Activated CD8-positive, alpha-beta T cell treated with anti-CD3 and anti-CD28 coated beads, Interleukin-2, amount 10 ng/mL, durations not matched to agents 7 days and 5 days (primary cell): ENCODE measurements at regions of chr18 and their contacts with region 1.

Region 1: DNA sequence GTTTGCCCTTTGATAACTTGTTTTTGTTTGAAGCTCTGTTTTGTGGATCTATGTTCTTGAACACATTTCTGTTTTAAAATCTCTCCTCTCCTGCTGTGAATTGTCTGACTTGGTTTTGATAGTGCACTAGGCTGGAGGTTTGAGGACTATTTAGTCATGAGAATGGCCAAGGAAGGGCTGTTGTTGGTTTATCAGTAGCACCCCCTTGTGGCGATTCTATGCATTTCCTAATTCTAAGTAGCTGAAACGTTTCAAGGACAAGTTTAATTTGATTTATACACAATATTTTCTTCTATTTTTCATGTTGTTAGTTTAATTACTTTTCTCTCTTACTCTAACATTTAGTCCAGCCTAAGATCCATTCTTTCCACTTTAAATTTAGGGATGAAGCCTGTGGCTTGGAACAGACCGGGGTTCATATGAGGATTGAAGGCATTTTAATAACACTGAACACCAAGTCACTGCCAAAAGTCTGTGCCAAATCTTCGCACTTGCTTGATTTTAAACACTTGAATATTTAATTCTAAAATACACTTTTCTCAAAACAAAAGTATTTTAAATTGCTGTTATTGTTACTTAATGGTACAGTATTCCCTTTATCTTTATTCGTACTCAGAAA is 166.0 kb downstream of the SOCS6 start:
- DNase-seq: peak; percentile 52
- ATAC-seq: peak; percentile 44
- H3K4me3 Mint-ChIP-seq: no peak overlapping the region
- H3K27ac Mint-ChIP-seq: no peak overlapping the region
- H3K4me1 Mint-ChIP-seq: no peaks in the 10 kb centered on the region
- H3K27me3 Mint-ChIP-seq: no peaks in the 10 kb centered on the region

Region 2: GRCh38 chr18:70195852-70196434 is 258.9 kb before region 1 on chr18:
- CTCF ChIA-PET with region 1: interaction called, 29 read pairs
- POLR2A ChIA-PET with region 1: no interaction called
- DNase-seq: peak; percentile 29
- ATAC-seq: no peak
- H3K4me3 Mint-ChIP-seq: no peak overlapping the region
- H3K27ac Mint-ChIP-seq: no peak overlapping the region
- H3K4me1 Mint-ChIP-seq: peaks cover 8% of the 10 kb centered on the region
- H3K27me3 Mint-ChIP-seq: no peaks in the 10 kb centered on the region

Region 3: DNA sequence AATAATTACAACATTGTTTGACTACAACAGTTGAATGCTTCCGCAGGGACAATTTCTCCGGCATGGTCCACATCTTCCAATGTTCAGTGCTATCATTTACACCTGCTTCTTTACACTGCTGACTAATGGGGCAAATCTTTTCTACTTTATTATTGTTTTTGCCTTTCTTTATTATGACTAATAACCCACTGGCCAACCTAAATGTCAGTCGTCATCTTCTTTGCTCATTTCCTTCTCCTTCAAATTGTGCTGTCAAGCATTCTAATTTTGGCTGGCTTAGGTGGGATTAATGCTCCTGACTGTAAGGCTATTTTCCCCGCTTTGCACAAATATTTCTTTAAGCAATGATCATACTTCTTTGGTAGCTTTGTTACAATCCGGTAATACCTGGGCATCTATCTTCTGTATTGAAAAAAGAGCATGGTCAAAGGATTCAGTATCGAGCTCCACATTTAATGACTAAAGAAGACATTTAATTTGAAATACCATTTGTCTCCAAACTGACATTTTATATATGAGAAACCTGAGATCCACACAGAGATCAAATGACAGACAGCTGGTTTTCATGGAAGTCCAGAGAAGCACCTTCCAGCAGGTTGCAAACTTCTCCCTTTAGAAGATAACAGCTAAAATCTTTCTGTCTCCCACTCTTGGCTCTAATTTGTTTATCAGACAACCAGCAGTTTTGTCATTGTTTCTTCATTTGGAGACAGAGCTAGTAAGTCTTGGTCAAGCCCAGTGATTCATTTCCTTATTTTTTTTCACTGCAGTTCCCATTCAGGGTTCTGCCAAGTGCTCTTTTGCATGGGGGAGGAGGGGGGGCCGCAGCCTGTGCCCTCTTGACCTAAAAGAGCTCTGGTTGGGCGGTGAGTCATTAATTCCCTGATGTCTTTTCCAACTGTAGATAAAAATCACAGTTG is 33.1 kb before region 1 on chr18:
- CTCF ChIA-PET with region 1: no interaction called
- POLR2A ChIA-PET with region 1: no interaction called
- DNase-seq: no peak
- ATAC-seq: no peak
- H3K4me3 Mint-ChIP-seq: no peak overlapping the region
- H3K27ac Mint-ChIP-seq: no peak overlapping the region
- H3K4me1 Mint-ChIP-seq: peaks cover 4% of the 10 kb centered on the region
- H3K27me3 Mint-ChIP-seq: peaks cover 6% of the 10 kb centered on the region